Activated T-helper 1 cell treated with anti-CD3 and anti-CD28 coated beads, Interleukin-12 subunit alpha, Interleukin-12 subunit beta, Interleukin-2, Interleukin-4 antibody, amounts not matched to agents 30 ng/mL and 10 ng/mL and 1 ng/mL, durations not matched to agents 14 hours and 24 hours and 36 hours (primary cell): ENCODE measurements at regions of chr13 and their contacts with region 1.

Region 1: DNA sequence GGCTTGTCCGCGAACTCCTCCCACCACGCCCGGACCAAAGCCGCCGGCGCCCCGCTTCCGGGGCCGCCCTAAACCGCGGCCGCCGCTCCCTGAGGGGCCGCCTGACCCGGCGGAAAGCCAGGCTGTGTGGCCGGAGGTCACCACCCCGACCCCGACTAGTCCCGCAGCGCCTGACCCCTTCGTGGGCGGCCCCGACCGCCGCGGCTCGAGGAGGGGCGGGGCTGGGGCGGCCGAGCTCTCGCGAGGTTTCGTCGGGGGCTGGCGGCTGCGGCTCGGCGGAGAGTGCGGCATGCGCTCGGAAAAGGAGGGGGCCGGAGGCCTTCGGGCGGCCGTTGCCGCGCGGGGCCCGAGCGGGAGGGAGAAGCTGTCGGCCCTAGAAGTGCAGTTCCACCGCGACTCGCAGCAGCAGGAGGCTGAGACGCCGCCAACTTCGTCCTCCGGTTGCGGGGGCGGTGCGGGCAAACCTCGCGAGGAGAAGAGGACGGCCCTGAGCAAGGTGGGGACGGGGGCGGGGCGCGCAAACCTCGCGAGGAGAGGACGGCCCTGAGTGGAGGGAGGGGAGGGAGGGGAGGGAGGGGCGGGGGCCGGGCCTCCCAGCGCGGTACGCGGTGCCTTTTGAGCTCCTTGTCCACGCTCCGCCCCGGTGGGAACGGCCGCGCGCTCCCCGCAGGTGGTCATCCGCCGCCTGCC is at the start of gene UPF3A:
- DNase-seq: peak; percentile 83
- H3K4me3 Mint-ChIP-seq: peak within 1 kb of the TSS; percentile 90
- H3K27ac Mint-ChIP-seq: peak within 1 kb of the TSS; percentile 98
- H3K4me1 Mint-ChIP-seq: peaks cover 52% of the 10 kb centered on the region
- H3K27me3 Mint-ChIP-seq: no peaks in the 10 kb centered on the region
- total RNA-seq, gene UPF3A: 45.9 and 48.3 TPM in 2 replicates

Region 2: DNA sequence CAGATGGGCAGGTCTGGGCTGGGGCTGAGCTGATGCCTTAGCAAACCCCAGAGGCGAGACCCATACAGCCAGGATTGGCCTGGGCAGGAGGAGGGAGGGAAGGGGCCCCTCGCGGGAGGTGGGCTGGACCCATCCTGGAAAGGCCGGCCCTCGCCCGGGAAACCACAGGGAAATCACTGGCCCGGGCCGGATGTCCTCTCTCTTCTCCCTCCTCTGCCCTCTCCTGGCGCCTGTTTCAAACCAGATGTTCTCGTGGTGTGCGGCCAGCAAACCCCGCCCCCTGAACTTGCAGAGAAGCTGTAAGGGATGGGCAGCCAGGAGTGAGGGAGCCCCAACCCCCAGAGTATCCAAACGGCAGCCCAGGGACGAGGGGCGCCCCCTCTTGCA is 479.4 kb before region 1 on chr13:
- intact Hi-C with region 1: no loop called
- DNase-seq: no peak
- H3K4me3 Mint-ChIP-seq: no peak overlapping the region
- H3K27ac Mint-ChIP-seq: no peak overlapping the region
- H3K4me1 Mint-ChIP-seq: no peaks in the 10 kb centered on the region
- H3K27me3 Mint-ChIP-seq: no peaks in the 10 kb centered on the region

Region 3: DNA sequence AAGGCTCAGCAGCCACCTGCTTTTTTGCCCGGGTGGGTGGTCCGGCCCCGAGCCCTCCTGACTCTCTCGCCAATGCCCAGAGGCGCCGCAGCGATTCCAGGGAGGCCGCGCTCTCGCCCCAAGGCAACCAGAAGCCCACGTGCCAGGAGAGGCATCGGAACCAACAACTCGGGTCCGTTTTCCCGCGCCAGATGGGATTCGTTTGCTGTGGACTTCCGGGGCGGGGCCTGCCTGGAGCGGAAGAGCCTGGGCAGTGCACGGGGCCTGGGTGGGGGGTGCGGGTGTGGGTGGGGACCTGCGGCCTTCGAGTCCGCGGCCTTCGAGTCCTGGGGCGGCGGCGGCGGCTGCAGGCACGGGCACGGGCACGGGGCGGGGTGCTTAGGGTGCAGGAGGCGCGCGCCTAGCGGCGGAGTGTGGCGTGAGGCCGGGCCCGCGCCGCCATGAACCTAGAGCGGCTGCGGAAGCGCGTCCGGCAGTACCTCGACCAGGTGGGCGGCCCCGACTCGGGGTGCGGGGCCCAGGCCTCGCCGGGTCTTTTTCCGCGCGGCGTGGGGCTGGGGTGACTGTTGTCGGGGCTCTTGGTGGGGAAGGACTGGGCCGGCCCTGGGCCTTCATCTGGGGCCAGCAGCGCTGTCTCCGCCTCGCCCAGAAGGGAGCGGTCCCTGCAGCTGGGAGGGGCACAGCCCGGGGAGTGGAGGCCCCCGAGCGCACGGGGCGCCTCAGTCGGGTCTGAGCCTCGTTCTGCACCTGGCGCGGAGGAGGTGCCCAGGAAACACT is 46.7 kb before region 1 on chr13 and contains the start of gene CDC16:
- intact Hi-C with region 1: loop called (anchors 1 kb)
- DNase-seq: peak; percentile 80
- H3K4me3 Mint-ChIP-seq: peak within 1 kb of the TSS; percentile 88
- H3K27ac Mint-ChIP-seq: peak within 1 kb of the TSS; percentile 81
- H3K4me1 Mint-ChIP-seq: peaks cover 22% of the 10 kb centered on the region
- H3K27me3 Mint-ChIP-seq: peaks cover 8% of the 10 kb centered on the region
- total RNA-seq, gene CDC16: 91.4 and 93.2 TPM in 2 replicates